ENCODE measurements at regions of chr5 and their contacts with region 1.

Region 1: DNA sequence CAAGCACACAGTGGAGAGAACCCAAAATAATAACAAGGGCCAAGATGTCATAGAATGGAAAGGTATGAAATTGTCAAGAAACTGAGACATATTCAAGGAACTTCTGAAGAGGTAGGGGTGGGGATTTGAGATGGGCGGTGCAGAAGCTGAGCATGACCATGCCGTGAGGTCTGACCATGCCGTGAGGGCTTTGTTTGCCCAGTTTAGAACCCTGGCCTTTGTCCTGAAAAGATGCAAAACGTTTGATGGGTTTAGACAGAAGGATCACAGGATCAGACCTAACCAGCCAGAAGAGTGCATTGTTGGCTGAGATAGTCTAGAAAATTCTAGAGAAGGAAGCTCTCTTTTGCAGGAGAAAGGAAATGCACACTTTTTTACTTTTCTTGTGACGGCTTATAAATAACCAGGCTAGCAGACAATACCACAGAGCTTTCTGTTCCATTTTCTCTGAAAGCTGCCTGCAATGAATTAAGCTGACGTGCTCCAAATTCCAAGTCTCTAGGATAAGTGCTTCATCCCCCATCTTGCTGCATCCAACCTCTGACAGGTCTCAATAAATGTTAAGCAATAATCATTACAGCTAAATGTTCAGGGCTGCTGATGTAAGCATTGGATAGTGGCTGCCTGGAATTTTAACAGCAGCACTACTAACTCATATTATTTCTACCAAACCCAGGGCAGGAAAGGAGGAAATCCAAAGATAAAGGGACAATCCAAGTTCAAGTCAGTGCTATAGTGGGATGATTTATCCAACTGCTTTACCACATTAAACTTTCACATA is 110.9 kb upstream of the IL6ST start:
- DNase-seq: no peak
- ATAC-seq: peak in 1 of 2 donors; percentile 62
- H3K4me3 ChIP-seq: no peak overlapping the region
- H3K27ac ChIP-seq: no peak overlapping the region
- H3K4me1 ChIP-seq: peaks cover 2% of the 10 kb centered on the region
- H3K27me3 ChIP-seq: no peaks in the 10 kb centered on the region

Region 2: DNA sequence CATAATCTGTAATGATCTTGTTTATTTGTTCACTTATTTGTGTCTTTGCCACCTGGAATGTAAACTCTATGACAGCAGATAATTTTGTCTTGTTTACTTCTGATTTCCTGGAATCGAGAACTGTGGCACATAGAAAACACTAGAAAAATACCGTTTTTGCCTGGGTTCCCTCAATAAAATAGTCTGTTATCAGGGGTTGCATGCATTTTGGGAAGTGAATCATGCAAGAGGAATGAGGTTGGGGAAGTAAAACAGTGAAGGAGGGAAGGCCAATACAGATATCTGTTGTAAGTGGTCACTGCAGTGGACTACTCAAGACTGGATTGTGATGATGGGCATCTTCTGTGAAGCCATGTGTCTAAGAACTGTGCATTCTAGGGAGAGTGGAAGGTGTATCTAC is 65.7 kb before region 1 on chr5:
- intact Hi-C with region 1: loop called in 1 of 4 experiments (anchors 10 kb)
- DNase-seq: no peak
- ATAC-seq: peak; percentile 13 to 36
- H3K4me3 ChIP-seq: no peak overlapping the region
- H3K27ac ChIP-seq: no peak overlapping the region
- H3K4me1 ChIP-seq: no peaks in the 10 kb centered on the region
- H3K27me3 ChIP-seq: no peaks in the 10 kb centered on the region

Measured in right cardiac atrium (tissue), 5 donors.